Activated T-helper 1 cell treated with anti-CD3 and anti-CD28 coated beads, Interleukin-12 subunit alpha, Interleukin-12 subunit beta, Interleukin-2, Interleukin-4 antibody, amounts not matched to agents 30 ng/mL and 10 ng/mL and 1 ng/mL, durations not matched to agents 14 hours and 24 hours and 36 hours (primary cell): ENCODE measurements at regions of chr2 and their contacts with region 1.

Region 1: DNA sequence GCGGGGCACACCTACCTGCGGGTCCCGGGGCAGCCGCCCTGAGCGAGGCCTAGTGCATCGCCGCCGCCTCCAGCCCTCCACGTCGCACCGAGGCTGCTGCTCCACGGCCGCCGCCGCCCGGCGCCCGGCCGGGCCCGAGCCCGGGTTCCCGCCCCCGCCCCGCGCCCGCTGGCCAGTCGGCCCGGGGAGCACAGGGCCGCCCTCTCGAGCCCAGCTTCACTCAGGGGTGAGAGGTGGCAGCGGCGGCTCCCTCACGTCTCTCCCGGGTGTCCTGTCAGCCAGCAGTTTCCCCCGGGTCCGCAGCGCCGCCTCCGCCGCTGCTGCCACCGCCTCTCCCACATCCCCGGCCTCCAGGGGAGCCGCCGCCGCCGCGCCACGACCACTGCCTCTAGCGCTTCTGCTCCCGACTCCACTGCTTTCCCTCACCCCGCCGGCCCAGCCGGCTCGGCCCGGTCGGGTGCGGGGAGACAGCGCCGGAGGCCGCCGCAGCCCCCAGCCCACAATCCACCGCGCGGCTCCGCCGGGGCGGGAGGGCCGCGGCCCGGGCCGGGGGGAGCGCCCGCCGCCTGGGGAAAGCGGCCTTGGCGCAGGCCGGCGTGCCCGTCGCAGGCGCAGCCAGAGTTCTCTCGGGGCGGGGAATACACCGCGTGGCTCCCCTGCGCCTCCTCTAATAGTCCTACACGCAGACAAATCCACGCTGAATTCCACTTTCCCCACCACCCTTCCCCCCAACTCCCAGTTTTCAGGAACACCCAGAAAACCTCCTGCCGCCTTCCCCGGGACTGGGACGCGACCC is at the start of gene VPS54:
- DNase-seq: peak; percentile 53
- H3K4me3 Mint-ChIP-seq: peak within 1 kb of the TSS; percentile 94
- H3K27ac Mint-ChIP-seq: peak within 1 kb of the TSS; percentile 97
- H3K4me1 Mint-ChIP-seq: peaks cover 43% of the 10 kb centered on the region
- H3K27me3 Mint-ChIP-seq: no peaks in the 10 kb centered on the region
- total RNA-seq, gene VPS54: 14.9 and 15.4 TPM in 2 replicates

Region 2: DNA sequence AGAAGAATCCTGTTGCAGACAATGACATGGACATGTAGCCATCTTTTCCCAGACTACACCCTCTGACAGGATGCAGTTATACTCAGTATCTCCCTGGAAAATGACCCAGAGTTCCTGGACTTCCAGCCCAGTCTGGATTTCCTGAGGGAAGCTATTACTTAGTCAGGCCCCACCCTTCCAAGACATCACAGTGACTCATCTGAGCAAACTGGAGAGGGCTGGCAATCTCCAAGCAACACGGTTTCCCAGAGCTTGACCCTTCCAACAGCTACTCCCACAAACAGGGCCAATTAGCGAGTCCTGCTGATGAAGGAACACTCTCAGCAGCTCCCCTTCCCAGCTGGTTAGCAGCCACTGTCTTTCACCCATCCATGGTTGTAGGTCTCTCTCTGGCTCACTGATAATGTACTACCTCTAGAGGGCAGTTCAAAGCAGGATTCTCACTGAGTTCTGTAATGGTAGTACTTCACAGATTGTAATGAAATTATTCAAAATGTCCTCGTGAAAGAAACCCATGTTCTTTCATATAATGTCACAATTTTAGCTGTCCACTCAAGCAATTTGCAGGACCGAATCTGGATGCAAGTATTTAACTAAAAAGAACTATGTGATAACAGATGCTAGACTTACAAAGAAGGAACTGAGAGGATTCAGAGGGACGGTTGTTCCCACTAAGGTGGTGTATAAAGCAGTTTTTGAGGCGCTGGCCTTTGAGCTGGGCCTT is 320.1 kb before region 1 on chr2:
- intact Hi-C with region 1: loop called (anchors 10 kb)
- DNase-seq: no peak
- H3K4me3 Mint-ChIP-seq: no peak overlapping the region
- H3K27ac Mint-ChIP-seq: no peak overlapping the region
- H3K4me1 Mint-ChIP-seq: no peaks in the 10 kb centered on the region
- H3K27me3 Mint-ChIP-seq: peaks cover 4% of the 10 kb centered on the region

Region 3: DNA sequence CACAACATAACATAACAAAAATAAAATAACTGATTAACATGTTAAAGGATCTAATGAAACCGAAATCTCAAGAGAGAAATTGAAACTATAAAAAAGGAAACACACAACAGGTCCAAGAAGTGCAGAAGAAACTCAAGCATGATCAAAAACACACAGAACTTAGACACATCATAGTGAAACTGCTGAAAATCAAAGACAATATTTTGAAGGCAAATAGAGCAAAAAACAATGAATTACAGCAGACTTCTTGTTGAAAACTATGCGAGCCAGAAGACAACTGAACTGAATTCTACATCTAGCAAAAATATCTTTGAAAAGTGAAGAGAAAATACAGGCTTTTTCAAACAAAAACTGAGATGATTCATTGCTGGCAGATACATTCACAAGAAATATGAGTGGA is 116.1 kb before region 1 on chr2:
- intact Hi-C with region 1: loop called (anchors 10 kb)
- DNase-seq: no peak
- H3K4me3 Mint-ChIP-seq: no peak overlapping the region
- H3K27ac Mint-ChIP-seq: peak overlapping the region; percentile 45
- H3K4me1 Mint-ChIP-seq: peaks cover 6% of the 10 kb centered on the region
- H3K27me3 Mint-ChIP-seq: no peaks in the 10 kb centered on the region

Region 4: GRCh38 chr2:63977904-63978303 is 41.2 kb before region 1 on chr2:
- intact Hi-C with region 1: loop called (anchors 2 kb)
- DNase-seq: peak; percentile 23
- H3K4me3 Mint-ChIP-seq: peak overlapping the region; percentile 37
- H3K27ac Mint-ChIP-seq: peak overlapping the region; percentile 77
- H3K4me1 Mint-ChIP-seq: peaks cover 13% of the 10 kb centered on the region
- H3K27me3 Mint-ChIP-seq: no peaks in the 10 kb centered on the region